ENCODE measurements at regions of chr14 and their contacts with region 1.

Region 1: DNA sequence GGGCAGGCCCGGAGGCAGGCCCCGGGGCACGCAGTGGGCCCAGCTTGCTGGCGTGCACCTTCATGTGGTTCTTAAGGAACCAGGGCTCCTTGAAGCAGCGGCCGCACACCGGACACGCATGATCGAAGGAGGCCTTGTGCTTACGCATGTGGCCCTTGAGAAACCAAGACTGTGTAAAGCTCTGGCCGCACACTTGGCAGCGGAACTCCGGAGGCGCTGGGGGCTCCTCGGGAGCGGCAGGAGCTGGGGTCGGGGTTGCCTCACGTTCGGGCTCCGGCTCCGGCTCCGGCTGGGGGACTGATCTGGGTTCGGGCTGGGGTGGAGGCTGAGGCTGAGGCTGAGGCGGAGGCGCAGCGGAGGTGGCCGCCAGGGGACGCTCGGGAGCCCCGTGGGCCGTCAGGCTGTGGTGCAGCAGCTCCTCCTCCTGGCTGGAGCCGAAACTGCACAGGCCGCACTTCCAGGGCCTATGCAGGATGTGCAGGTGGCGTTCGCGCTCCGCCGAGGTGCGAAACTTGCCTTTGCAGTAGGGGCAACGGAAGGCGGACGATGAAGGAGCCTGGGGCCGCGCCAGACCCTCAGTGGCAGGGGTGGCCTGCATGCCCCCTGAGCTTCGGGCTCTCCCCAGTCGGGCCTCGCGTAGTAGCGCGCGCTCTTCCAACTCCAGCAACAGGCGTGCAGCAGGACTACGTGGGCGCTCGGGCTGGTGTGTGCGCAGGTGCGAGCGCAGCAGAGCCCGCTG is 6.0 kb downstream of the ZNF219 start:
- DNase-seq: peak; percentile 95
- H3K4me3 ChIP-seq: peak overlapping the region in 1 of 2 experiments; percentile 36; a peak in 1 of 4 replicates
- H3K27ac ChIP-seq: no peak overlapping the region; a peak in 1 of 4 replicates
- H3K4me1 ChIP-seq: peaks cover 21 to 28% of the 10 kb centered on the region in 2 experiments
- H3K27me3 ChIP-seq: no peaks in the 10 kb centered on the region
- CTCF ChIP-seq: peak; percentile 97
- EP300 ChIP-seq: no peak
- RAD21 ChIP-seq: peak; percentile 92

Region 2: DNA sequence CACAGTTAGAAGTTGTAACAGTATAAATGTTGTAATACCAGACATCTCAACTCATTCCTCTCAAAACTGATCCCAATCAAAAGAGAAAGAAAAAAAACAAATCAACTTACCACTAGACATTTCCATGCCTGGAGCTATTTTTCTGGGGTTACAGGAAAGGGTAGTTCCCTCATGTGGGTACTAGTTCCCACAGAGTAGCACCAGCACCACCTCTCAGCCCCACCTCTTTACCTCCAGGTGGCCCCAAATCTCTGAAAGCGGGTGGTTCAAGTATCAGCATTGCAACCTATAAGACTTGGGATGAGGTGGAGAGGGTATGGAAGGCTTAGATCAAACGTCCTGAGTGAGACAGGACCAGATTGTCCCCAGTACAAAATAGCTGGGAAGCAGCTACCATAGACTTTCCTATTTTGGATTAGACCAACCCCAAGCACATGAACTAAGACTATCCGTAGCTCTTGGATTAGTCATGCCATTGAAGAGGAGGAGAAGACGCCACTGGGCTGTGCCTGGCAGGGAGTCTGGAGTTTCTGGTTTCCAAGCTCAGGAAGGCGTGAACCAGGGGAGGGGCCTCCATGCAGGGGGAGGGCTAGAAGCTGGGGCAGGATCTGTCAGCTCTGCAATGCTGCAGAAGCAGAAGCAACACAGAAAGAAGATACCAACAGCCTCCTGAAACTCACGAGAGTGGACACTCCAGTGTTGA is 93.6 kb before region 1 on chr14 and contains the start of gene SLC39A2:
- CTCF ChIA-PET with region 1: interaction called, 24 read pairs
- POLR2A ChIA-PET with region 1: no interaction called
- DNase-seq: no peak
- H3K4me3 ChIP-seq: no peak within 1 kb of the TSS
- H3K27ac ChIP-seq: no peak within 1 kb of the TSS
- H3K4me1 ChIP-seq: no peaks in the 10 kb centered on the region; a peak in 1 of 4 replicates
- H3K27me3 ChIP-seq: no peaks in the 10 kb centered on the region
- CTCF ChIP-seq: no peak
- EP300 ChIP-seq: no peak
- RAD21 ChIP-seq: no peak
- polyA plus RNA-seq, gene SLC39A2: not detected in 2 replicates

Region 3: GRCh38 chr14:21039585-21040369 is 52.7 kb before region 1 on chr14:
- CTCF ChIA-PET with region 1: interaction called, 22 read pairs
- POLR2A ChIA-PET with region 1: no interaction called
- DNase-seq: peak; percentile 56
- H3K4me3 ChIP-seq: no peak overlapping the region; a peak in 1 of 4 replicates
- H3K27ac ChIP-seq: no peak overlapping the region
- H3K4me1 ChIP-seq: peaks cover 13 to 20% of the 10 kb centered on the region in 2 experiments; a peak in 3 of 4 replicates
- H3K27me3 ChIP-seq: no peaks in the 10 kb centered on the region; the same call in 1 of the 2 replicates
- CTCF ChIP-seq: peak; percentile 67
- EP300 ChIP-seq: no peak
- RAD21 ChIP-seq: peak; percentile 86

Region 4: GRCh38 chr14:21060614-21061346 is 31.7 kb before region 1 on chr14:
- CTCF ChIA-PET with region 1: interaction called, 296 read pairs
- POLR2A ChIA-PET with region 1: no interaction called
- DNase-seq: no peak
- H3K4me3 ChIP-seq: no peak overlapping the region
- H3K27ac ChIP-seq: no peak overlapping the region
- H3K4me1 ChIP-seq: peaks cover 0 to 10% of the 10 kb centered on the region in 2 experiments; a peak in 3 of 4 replicates
- H3K27me3 ChIP-seq: no peaks in the 10 kb centered on the region
- CTCF ChIP-seq: no peak
- EP300 ChIP-seq: no peak
- RAD21 ChIP-seq: no peak

Region 5: DNA sequence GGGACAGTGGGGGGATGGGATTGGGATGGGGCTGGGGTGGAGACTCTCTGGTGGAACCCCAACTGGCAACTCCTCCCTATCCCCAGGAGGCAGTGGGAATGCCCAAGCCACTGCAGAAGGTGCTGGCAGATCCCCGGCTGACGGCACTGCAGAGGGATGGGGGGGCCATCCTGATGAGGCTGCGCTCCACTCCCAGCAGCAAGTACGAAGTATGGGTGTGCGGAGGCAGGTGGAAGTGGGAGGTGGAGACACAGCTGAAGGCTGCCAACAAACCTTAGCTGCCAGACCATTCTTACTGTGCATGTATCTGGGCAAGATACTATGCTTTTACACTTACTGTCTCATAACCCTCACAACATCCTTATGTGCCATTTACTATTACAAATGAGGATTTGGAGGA is 14.2 kb before region 1 on chr14:
- CTCF ChIA-PET with region 1: interaction called, 296 read pairs
- POLR2A ChIA-PET with region 1: interaction called, 3 read pairs
- DNase-seq: no peak
- H3K4me3 ChIP-seq: no peak overlapping the region
- H3K27ac ChIP-seq: no peak overlapping the region
- H3K4me1 ChIP-seq: peaks cover 0 to 13% of the 10 kb centered on the region in 2 experiments; a peak in 1 of 4 replicates
- H3K27me3 ChIP-seq: no peaks in the 10 kb centered on the region
- CTCF ChIP-seq: no peak
- EP300 ChIP-seq: no peak
- RAD21 ChIP-seq: no peak

Region 6: DNA sequence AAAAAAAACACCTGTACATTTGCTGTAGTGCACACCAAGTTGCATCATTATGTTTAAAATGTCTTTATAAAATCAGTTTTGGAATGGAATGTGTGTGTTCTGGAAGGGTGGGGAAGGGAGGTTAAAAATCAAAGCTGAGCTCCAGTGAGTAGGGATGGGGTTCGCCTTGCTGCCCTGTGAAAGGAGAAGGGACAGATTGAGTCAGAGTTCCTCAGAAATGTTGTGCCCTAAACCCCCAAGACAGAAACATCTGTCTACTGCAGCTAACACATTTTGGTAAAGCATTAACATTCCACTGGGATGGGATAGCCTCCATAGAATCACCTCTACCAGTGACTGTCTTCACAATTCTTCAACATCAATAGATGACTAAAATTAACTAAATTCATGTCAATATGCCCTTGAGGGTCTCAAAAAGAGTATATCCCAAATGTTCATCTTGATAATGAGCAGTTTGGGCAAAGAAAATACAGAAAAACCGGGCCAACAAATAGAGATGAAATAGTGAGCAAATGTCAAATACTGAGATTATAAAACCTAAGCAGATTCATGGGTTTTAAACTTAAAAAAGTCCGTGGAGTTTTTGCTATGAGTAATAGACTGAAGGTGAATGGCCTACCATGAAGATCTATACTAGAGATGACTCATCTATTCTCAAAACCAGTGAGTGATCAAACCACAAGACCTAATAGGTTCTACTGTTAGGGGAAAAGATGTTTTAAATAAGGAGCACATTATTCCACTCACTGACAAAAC is 171.4 kb after region 1 on chr14:
- CTCF ChIA-PET with region 1: no interaction called
- POLR2A ChIA-PET with region 1: no interaction called
- DNase-seq: no peak
- H3K4me3 ChIP-seq: no peak overlapping the region; a peak in 1 of 4 replicates
- H3K27ac ChIP-seq: peak overlapping the region; percentile 8 to 78; a peak in 3 of 4 replicates
- H3K4me1 ChIP-seq: peaks cover 13 to 39% of the 10 kb centered on the region in 2 experiments
- H3K27me3 ChIP-seq: no peaks in the 10 kb centered on the region
- CTCF ChIP-seq: no peak
- EP300 ChIP-seq: 0 out of 4 replicates have a peak, but pooled peaks of 1 of the 2 experiments have one; percentile 14
- RAD21 ChIP-seq: no peak

Measured in SK-N-SH (cell line).